Activated CD8-positive, alpha-beta memory T cell treated with anti-CD3 and anti-CD28 coated beads, Interleukin-2, amount 10 ng/mL, durations not matched to agents 7 days and 5 days (primary cell): ENCODE measurements at regions of chr15 and their contacts with region 1.

Region 1: DNA sequence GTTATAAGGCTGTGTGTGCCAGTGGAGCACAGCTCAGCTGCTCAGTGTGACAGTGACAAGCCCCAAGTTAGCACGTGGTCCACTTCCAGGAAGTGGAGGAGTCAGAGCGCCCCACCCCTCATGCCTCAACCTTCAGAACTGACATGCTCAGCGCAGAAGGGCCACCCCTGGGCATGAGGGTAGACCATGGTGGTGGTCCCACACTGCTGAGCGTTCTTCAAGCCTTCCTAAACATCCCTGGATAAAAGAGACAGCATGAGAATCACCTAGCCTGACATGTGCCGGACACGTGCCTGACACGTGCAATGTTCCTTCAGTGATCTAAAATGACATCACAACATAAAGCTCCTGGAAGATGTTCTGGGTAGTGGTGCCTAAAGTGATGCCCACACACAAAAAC is 16.8 kb downstream of the ATP10A start:
- DNase-seq: peak; percentile 81
- ATAC-seq: peak; percentile 53
- H3K4me3 Mint-ChIP-seq: no peak overlapping the region
- H3K27ac Mint-ChIP-seq: peak overlapping the region; percentile 75
- H3K4me1 Mint-ChIP-seq: peaks cover 59% of the 10 kb centered on the region
- H3K27me3 Mint-ChIP-seq: no peaks in the 10 kb centered on the region

Region 2: DNA sequence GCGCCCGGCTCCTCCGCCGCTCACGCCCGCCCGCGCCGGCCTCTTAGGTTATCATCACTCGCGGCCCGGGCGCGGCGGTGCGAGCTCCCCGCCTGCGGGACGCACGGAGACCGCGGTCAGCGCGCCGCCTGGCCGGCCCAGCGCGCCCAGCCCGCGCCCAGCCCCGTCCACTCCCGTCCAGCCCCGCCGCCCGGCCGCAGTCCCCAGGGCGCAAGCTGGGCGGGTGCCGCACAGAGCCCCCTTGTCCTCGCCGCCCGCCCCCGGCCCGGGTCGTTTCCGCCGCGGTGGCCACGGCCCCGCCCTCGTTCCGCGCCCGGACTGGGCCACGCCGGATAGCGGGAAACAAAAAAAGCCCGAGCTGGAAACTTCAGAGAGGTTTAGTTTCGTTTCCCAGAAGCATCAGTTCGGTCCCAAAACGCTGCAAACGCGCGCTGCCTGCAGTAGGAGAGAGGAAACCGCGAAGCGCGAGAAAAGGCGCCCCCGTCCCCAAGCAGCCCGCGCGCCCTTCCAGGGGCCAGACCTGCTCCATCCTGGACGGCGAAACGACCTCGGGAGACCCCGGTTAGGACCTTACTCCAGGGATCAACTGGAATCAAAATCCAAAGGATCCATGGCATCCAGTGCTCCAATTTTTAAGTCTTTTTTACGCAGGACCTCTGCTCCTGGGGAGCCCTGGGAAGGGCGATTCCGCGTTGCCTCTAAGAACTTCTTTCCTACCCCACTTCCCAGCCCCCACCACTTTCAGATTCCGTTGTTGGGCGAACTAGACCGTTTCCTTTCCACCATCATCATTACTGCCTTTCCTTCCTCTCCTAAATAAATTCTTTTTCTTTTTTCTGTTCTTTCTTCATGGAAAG is 17.0 kb after region 1 on chr15 and contains the start of gene ATP10A:
- CTCF ChIA-PET with region 1: interaction called, 18 read pairs
- DNase-seq: peak; percentile 77
- ATAC-seq: peak; percentile 43
- H3K4me3 Mint-ChIP-seq: peak within 1 kb of the TSS; percentile 96
- H3K27ac Mint-ChIP-seq: peak within 1 kb of the TSS; percentile 94
- H3K4me1 Mint-ChIP-seq: peaks cover 26% of the 10 kb centered on the region
- H3K27me3 Mint-ChIP-seq: peaks cover 5% of the 10 kb centered on the region
- total RNA-seq, gene ATP10A: 36.7 to 70.1 TPM